Activated CD4-positive, alpha-beta T cell treated with anti-CD3 and anti-CD28 coated beads, Interleukin-2, amount 10 ng/mL, durations not matched to agents 7 days and 5 days (primary cell): ENCODE measurements at regions of chr5 and their contacts with region 1.

Region 1: GRCh38 chr5:113026211-113026610 is 49.6 kb downstream of the DCP2 start:
- DNase-seq: no peak
- H3K4me3 Mint-ChIP-seq: no peak overlapping the region
- H3K27ac Mint-ChIP-seq: no peak overlapping the region
- H3K4me1 Mint-ChIP-seq: peaks cover 36% of the 10 kb centered on the region
- H3K27me3 Mint-ChIP-seq: no peaks in the 10 kb centered on the region

Region 2: GRCh38 chr5:112935675-112936074 is 90.5 kb before region 1 on chr5:
- CTCF ChIA-PET with region 1: no interaction called
- POLR2A ChIA-PET with region 1: no interaction called
- DNase-seq: no peak
- H3K4me3 Mint-ChIP-seq: no peak overlapping the region
- H3K27ac Mint-ChIP-seq: no peak overlapping the region
- H3K4me1 Mint-ChIP-seq: peaks cover 26% of the 10 kb centered on the region
- H3K27me3 Mint-ChIP-seq: no peaks in the 10 kb centered on the region

Region 3: DNA sequence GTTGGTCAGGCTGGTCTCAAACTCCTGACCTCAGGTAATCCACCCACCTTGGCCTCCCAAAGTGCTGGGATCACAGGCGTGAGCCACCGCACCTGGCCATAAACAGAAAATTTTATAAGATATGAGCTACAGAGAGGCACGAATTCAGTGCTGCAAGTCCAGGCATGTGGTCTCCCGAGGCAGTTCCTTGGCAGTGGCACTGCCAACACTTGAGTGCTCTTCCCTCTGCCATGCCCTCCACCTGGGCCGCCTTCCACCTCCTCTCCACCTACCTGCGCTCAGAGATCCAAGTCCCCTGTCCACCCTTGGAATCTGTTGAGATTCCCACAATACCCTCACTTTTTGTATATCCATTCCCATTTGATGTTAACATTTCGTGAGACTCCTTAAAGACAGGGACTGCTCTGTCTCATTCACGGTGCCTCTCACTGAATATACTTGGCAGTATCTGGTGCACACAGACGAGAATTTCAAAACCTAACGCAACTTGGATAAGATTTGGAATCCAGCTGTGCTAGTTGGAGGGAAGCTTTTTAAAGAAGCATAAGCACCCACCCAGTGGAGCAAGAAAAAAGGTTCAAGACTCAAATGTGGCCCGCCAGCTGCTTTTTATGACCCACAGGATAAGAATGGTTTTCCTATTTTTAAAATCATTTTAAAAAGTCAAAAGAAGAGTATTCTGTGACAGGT is 18.7 kb after region 1 on chr5:
- CTCF ChIA-PET with region 1: interaction called, 4 read pairs
- POLR2A ChIA-PET with region 1: interaction called, 11 read pairs
- DNase-seq: no peak
- H3K4me3 Mint-ChIP-seq: no peak overlapping the region
- H3K27ac Mint-ChIP-seq: no peak overlapping the region
- H3K4me1 Mint-ChIP-seq: peaks cover 6% of the 10 kb centered on the region
- H3K27me3 Mint-ChIP-seq: no peaks in the 10 kb centered on the region